Right ventricle myocardium inferior (tissue), 1 donor: ENCODE measurements at regions of chr7 and their contacts with region 1.

Region 1: DNA sequence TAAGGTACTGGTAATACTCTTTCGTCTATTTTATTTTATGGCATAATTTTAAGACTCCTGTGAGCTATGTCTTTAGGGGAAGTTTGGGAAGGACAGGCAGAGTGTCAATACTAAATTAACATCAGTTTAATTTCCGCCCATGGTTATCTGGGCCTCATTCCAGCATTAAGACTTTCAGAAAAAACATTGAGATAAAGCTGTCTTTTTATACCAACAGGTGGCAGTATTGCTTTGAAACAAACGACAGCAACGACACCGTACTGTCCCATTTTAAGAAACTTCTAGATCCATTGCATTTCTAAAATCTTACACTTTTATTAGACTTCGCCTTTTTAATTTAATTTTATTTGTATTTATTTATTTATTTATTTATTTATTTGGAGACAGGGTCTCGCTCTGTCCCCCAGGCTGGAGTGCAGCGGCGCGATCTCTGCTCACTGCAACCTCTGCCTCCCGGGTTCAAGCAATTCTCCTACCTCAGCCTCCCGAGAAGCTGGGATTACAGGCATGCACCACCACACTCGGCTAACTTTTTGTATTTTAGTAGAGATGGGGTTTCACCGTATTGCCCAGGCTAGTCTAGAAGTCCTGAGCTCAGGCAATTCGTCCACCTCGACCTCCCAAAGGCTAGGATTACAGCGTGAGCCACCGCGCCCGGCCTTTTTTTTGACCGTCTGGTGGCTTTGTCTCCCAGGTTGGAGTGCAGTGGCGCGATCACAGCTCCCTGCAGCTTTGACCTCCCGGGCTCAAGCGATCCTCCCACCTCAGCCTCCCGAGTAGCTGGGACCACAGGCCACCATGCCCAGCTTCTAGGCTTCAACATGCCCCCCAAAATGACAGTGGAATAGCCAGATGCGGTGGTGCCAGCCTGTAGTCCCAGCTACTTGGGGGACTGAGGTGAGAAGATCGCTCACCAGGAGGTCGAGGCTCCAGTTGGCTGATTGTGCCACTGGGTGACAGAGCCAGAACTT is 78.7 kb upstream of the C1GALT1 start:
- DNase-seq: no peak
- ATAC-seq: peak; percentile 58

Region 2: DNA sequence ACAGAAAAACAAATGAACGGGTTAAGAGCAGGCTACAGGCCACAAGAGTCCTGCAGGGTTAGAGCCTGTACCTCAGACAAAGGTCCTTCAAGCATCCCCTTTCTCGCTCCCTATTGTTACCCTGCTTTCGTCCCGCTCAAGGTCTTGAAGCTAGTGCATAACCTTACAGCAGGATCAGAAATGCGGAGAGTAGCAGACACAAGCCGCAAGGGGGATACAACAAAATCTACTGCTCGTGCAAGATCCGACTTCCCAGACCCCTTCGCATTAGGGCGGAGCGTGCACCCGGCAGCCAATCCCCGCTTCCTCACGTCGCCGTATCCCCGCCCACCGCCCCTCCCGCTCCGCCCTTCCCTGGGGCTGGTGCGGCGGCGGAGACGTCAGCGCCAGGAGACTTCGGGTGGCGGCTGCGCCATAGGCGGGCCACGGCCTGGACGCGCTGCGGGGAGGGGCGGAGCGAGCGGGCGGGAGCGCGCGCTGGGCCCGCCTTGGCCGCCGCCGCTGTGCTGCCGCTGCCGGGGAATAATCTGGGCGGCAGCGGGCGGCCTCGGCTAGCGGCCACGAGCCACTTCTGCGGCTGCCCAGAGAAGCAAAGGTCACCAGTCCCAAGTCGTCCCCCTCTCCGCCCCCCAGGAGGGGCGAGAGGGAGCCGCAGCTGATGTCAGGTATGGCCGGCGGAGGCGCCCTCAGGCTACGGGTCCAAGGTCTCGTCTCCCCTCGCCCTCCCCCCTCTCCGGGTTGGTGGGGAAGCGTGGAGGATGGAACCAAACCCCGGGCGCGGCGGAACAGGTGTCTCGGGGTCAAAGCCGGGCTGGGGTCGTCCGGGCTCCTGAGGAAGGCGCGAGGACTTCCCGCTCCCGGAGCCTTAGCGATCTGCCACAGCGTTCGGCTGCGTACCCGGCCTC is 78.8 kb after region 1 on chr7 and contains the start of gene C1GALT1:
- intact Hi-C with region 1: loop called (anchors 5 kb)
- DNase-seq: peak; percentile 99
- ATAC-seq: peak; percentile 99
- total RNA-seq, gene C1GALT1: 19.6 TPM

Region 3: DNA sequence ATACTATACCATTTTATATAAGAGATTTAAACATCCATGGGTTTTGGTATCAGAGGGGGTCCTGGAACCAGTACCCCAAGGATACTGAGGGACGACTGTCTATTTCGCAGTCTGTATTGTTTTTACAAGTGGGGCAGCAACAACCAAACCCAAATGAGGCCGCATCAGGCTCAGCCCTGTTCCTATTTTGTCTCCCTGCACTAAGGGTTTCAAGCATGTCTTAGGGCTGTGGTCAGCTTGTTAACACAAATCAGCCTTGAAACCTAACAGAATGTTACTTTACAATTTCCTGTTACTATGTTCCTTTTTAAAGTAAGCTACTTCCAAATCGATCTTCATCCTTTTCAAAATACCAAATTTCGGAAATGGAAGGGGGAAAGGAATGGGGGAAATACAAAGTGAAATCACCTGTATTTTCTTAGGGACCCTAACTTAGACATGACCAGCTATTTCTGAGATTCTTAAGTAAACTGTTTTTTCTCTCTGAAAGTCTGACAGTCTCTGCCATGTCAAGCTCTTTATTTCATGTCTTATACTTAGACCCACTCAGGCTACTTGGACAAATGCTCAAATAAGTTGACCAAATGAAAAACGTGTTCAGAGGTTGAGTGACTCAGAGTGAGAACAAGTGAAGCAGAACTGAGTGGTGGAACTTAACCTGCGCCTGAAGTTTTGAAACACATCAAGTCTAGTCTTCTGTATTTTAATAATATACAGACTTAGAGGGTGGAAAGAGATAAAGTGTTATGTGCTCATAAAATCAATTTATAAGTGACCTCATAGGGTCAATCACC is 154.5 kb after region 1 on chr7:
- intact Hi-C with region 1: loop called (anchors 5 kb)
- DNase-seq: no peak
- ATAC-seq: no peak

Region 4: DNA sequence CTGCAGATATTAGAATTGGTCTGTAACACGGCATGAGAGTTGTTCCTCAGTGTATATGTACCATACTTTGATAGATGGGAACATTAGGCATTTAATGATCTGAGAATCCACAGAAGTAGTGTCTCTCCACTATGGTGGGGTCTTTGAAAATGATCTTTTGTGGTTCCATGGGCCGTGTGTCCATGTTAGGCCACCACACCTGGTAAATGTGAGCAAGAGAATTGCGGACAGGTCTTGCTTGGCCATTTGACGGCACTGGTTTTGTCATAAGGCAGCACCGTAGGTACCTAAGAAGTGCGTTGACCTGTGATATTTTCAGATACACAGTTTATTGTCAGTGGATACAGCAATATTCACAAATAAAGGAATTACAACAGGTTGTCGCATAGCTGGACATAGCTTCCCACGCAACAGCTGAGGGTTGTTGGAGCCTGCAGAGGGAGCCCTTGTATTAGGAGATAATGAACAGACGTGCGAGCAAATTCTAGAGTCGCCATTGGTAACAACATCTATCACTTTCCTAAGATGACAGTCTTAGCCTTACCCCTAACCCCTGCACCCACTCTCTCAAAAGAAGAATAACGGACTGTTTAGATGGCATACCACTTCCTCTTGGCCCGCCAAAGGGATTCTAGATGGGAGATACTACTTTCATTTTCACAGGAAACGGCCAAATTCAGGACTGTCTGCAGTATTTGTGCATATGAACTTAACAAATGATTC is 320.7 kb after region 1 on chr7:
- intact Hi-C with region 1: loop called (anchors 10 kb)
- DNase-seq: no peak
- ATAC-seq: peak; percentile 74

Region 5: GRCh38 chr7:7539711-7540110 is 436.1 kb after region 1 on chr7:
- intact Hi-C with region 1: loop called (anchors 2 kb)
- DNase-seq: no peak
- ATAC-seq: no peak